Caco-2 (cell line): ENCODE measurements at regions of chr2 and their contacts with region 1.

Region 1: GRCh38 chr2:64488050-64488974 is 34.4 kb downstream of the LGALSL start:
- DNase-seq: peak; percentile 72 to 83
- H3K4me3 ChIP-seq: no peak overlapping the region
- H3K4me3 Mint-ChIP-seq: no peak overlapping the region
- H3K27ac Mint-ChIP-seq: no peak overlapping the region
- H3K4me1 ChIP-seq: no peaks in the 10 kb centered on the region
- H3K4me1 Mint-ChIP-seq: peaks cover 6% of the 10 kb centered on the region
- H3K27me3 ChIP-seq: no peaks in the 10 kb centered on the region
- H3K27me3 Mint-ChIP-seq: no peaks in the 10 kb centered on the region
- CTCF ChIP-seq: peak; percentile 95

Region 2: DNA sequence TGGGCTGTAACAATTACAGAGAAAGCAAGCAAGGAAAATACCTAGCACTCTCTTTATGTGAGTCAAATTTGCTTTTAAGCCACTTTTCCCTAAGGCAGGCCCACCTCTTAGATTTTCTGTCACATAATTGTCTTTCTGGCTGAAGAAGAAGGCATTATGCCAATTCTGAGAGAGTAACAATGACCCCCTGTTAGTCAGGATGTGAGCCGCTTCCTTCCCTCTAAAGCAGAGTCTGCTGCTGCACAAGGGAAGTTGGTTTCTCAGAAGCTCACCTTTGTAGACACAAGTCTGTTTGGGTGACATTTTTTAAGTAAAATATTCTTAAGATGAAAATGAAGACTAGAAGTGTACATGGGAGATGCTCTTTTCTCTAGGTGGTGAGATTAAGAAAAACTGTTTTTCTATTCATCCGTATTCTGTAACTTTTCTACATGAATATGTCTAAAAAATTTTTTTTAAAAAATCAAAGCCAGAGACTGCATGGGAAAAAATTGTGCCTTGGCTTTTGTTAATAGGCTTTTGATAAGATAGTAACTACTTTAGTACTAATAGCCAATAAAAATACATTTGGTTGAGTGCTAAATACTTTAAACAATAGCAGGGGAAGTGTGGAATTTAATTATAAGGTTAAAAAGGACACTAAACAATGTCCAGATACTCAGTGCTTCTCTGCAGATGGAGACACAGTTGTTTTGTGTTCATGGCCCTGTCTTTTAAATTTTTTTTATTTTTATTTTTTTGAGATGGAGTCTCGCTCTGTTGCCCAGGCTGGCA is 435.7 kb before region 1 on chr2:
- CTCF ChIA-PET with region 1: interaction called, 12 read pairs
- POLR2A ChIA-PET with region 1: no interaction called
- intact Hi-C with region 1: loop called (anchors 1 kb)
- DNase-seq: no peak
- H3K4me3 ChIP-seq: no peak overlapping the region
- H3K4me3 Mint-ChIP-seq: no peak overlapping the region
- H3K27ac Mint-ChIP-seq: peak overlapping the region; percentile 32
- H3K4me1 ChIP-seq: peaks cover 26% of the 10 kb centered on the region
- H3K4me1 Mint-ChIP-seq: peaks cover 41% of the 10 kb centered on the region
- H3K27me3 ChIP-seq: no peaks in the 10 kb centered on the region
- H3K27me3 Mint-ChIP-seq: no peaks in the 10 kb centered on the region
- CTCF ChIP-seq: no peak

Region 3: DNA sequence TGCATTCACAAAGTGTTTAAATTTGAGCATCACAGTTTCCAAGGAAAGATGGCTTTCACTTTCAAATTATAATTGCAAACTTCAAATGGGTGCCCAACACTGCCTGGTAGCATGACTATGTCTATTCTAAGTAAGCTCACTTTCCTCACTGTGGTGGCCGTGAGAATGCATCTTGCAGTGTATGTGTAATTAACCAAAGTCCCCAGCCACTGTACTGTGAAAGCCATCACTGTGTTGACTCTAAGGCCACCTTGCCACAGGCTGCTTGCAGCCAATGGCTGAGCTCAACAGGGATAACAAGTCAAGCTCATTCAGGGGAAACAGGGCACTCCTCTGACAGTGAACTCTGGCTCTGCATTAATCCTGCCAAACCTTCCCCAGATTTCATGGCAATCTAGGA is 77.6 kb before region 1 on chr2:
- CTCF ChIA-PET with region 1: no interaction called
- POLR2A ChIA-PET with region 1: no interaction called
- intact Hi-C with region 1: no loop called
- DNase-seq: no peak
- H3K4me3 ChIP-seq: no peak overlapping the region
- H3K4me3 Mint-ChIP-seq: no peak overlapping the region
- H3K27ac Mint-ChIP-seq: no peak overlapping the region
- H3K4me1 ChIP-seq: peaks cover 17% of the 10 kb centered on the region
- H3K4me1 Mint-ChIP-seq: peaks cover 7% of the 10 kb centered on the region
- H3K27me3 ChIP-seq: no peaks in the 10 kb centered on the region
- H3K27me3 Mint-ChIP-seq: no peaks in the 10 kb centered on the region
- CTCF ChIP-seq: peak in 1 of 2 experiments; percentile 3

Region 4: DNA sequence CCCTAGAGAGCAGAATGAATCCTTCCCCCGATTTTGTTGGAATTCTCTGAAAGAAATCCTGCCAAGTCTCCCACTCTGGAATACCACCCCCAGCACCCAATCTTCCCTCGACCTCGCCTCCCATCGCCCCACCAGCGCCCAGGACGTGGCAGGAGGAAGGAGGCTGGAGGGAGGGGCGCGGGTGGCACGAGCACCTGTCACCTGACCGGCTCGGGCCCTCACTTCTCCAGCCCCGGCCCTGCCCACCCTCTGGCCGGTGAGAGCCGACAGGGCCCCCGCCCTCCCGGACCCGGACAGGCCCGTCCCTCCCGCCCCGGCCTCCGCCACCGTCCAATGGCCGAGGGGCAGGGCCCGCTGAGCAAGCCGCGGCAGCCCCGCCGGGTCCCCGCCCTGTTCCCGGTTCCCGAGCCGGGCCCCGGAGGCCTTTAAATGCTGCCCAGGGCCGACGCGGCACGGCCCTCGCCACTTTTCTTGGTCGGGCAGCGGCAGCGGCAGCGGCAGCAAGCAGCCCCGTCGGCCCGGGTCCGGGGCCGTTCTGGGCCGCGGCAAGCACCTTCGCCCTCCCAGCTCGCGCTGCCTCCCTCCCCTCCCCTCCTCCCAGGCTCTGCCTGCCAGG is 34.4 kb before region 1 on chr2 and contains the start of gene LGALSL:
- CTCF ChIA-PET with region 1: no interaction called
- POLR2A ChIA-PET with region 1: no interaction called
- intact Hi-C with region 1: loop called (anchors 2 kb)
- DNase-seq: peak; percentile 93 to 94
- H3K4me3 ChIP-seq: peak within 1 kb of the TSS; percentile 80
- H3K4me3 Mint-ChIP-seq: peak within 1 kb of the TSS; percentile 94
- H3K27ac Mint-ChIP-seq: peak within 1 kb of the TSS; percentile 98
- H3K4me1 ChIP-seq: peaks cover 11% of the 10 kb centered on the region
- H3K4me1 Mint-ChIP-seq: peaks cover 13% of the 10 kb centered on the region
- H3K27me3 ChIP-seq: no peaks in the 10 kb centered on the region
- H3K27me3 Mint-ChIP-seq: no peaks in the 10 kb centered on the region
- CTCF ChIP-seq: no peak
- total RNA-seq, gene LGALSL: 36.9 and 37.2 TPM in 2 replicates